Activated CD8-positive, alpha-beta T cell treated with anti-CD3 and anti-CD28 coated beads, Interleukin-2, amount 10 ng/mL, durations not matched to agents 7 days and 5 days (primary cell): ENCODE measurements at regions of chr3 and their contacts with region 1.

Region 1: GRCh38 chr3:189132231-189132707 is 39.5 kb upstream of the TPRG1 start:
- DNase-seq: peak; percentile 89
- ATAC-seq: peak; percentile 98
- H3K4me3 Mint-ChIP-seq: peak overlapping the region; percentile 60
- H3K27ac Mint-ChIP-seq: peak overlapping the region; percentile 93
- H3K4me1 Mint-ChIP-seq: peaks cover 28% of the 10 kb centered on the region
- H3K27me3 Mint-ChIP-seq: no peaks in the 10 kb centered on the region

Region 2: DNA sequence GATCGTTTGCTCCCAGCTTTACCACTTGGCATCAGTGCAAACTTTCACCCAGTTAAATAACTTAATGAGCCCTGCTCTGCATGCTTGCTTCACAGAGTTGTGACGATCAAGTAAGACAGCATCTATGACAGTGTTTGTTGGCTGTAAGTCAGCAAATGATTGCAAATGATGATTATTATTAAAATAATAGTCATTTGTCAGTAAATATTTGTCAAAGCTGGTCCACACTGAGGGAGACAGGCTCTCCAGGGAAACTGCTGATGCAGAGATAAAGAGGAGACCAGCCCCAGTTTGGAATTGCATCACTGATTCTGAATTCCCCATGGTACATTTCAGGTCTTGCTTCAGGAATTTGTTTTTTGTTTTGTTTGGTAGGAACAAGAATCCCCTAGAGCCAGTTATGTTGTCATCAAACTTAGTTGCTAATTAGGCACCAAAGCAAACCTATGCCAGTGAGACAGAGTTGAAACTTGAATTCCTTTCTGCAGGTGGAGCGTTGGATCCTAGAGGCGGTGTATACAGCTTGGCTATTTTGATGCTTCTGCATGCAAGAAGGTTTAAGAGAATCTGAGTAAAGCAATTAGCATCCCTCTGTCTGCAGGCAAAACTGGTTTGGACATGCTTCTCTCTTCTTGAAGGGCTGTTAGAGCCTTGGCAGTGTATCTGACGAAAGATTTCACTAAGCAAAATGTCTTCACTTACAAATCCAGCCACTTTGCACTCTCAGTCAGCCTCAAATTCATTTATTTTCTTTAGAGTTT is 299.1 kb before region 1 on chr3:
- CTCF ChIA-PET with region 1: no interaction called
- POLR2A ChIA-PET with region 1: no interaction called
- DNase-seq: no peak
- ATAC-seq: no peak
- H3K4me3 Mint-ChIP-seq: no peak overlapping the region
- H3K27ac Mint-ChIP-seq: no peak overlapping the region
- H3K4me1 Mint-ChIP-seq: peaks cover 12% of the 10 kb centered on the region
- H3K27me3 Mint-ChIP-seq: no peaks in the 10 kb centered on the region

Region 3: GRCh38 chr3:189121092-189121491 is 11.2 kb before region 1 on chr3:
- CTCF ChIA-PET with region 1: interaction called, 15 read pairs
- POLR2A ChIA-PET with region 1: interaction called, 10 read pairs
- DNase-seq: no peak
- ATAC-seq: no peak
- H3K4me3 Mint-ChIP-seq: peak overlapping the region; percentile 37
- H3K27ac Mint-ChIP-seq: peak overlapping the region; percentile 47
- H3K4me1 Mint-ChIP-seq: peaks cover 19% of the 10 kb centered on the region
- H3K27me3 Mint-ChIP-seq: no peaks in the 10 kb centered on the region

Region 4: GRCh38 chr3:189148081-189148507 is 15.8 kb after region 1 on chr3:
- CTCF ChIA-PET with region 1: interaction called, 49 read pairs
- POLR2A ChIA-PET with region 1: interaction called, 7 read pairs
- DNase-seq: peak; percentile 79
- ATAC-seq: peak; percentile 61
- H3K4me3 Mint-ChIP-seq: no peak overlapping the region
- H3K27ac Mint-ChIP-seq: no peak overlapping the region
- H3K4me1 Mint-ChIP-seq: peaks cover 24% of the 10 kb centered on the region
- H3K27me3 Mint-ChIP-seq: no peaks in the 10 kb centered on the region

Region 5: GRCh38 chr3:189222927-189223636 is 90.8 kb after region 1 on chr3:
- CTCF ChIA-PET with region 1: no interaction called
- POLR2A ChIA-PET with region 1: no interaction called
- DNase-seq: no peak
- ATAC-seq: no peak
- H3K4me3 Mint-ChIP-seq: no peak overlapping the region
- H3K27ac Mint-ChIP-seq: no peak overlapping the region
- H3K4me1 Mint-ChIP-seq: no peaks in the 10 kb centered on the region
- H3K27me3 Mint-ChIP-seq: no peaks in the 10 kb centered on the region